Left cardiac atrium (tissue), 4 donors: ENCODE measurements at regions of chr3 and their contacts with region 1.

Region 1: GRCh38 chr3:121545574-121546455 is at the start of gene POLQ:
- DNase-seq: peak; percentile 91
- ATAC-seq: peak; percentile 99
- total RNA-seq, gene POLQ: 0.77 to 0.79 TPM

Region 2: GRCh38 chr3:121648219-121648958 is 102.6 kb after region 1 on chr3:
- intact Hi-C with region 1: loop called in 1 of 2 experiments (anchors 2 kb)
- DNase-seq: no peak
- ATAC-seq: peak; percentile 97 to 99

Region 3: DNA sequence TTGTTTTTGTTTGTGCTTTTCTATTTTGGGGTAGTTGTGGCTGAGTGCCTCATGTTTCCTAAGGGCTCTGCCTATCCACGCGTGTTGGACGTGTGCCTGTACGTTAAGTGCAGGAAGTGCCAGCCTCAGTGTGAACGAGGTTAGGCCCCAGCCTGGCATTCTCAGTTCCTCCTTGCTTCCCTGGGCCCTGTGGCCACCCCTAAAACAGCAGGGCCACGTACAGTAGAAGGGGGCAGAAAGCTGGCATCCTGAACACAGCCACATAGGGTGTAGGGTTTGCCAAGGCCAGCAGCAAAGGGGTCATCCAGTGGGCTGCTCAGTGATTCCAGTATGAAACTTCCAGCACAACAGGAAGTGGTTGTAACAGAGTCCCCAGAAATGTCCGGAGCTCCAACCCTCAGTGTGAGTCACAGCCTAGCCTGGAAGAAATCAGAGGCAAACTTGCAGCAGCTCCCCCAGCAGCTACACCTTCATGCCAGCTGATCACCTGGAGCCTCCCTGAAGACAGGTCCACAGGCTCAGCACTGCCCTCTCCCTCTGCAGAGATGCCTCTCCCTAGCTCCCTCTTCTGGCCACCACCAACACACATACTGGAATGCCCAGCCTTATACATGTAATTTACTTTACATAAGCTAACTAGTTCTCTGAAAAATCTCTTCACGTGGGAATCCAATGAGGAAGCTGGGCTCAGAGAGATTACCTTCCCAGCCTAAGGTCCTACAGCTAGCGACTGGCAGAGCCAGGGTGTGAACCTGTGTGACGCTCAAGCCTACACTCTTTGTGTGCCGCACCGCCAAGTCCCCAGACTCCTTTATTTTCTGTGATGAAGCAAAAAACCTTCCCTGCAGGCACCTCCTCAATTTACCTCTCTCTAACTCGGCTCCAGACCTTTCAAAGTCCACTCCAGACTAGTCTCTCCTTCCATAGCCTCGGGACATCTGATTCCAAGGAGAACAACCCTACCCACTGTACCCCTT is 449.6 kb after region 1 on chr3:
- intact Hi-C with region 1: loop called (anchors 5 to 10 kb)
- DNase-seq: peak; percentile 43
- ATAC-seq: peak; percentile 70 to 72

Region 4: GRCh38 chr3:122258757-122259371 is 713.0 kb after region 1 on chr3:
- intact Hi-C with region 1: loop called in 1 of 2 experiments (anchors 5 kb)
- DNase-seq: peak; percentile 76
- ATAC-seq: peak; percentile 94 to 95